Endothelial cell of umbilical vein (primary cell): ENCODE measurements at regions of chr2 and their contacts with region 1.

Region 1: GRCh38 chr2:120722568-120723421 is 12.9 kb upstream of the GLI2 start:
- DNase-seq: peak; percentile 68
- H3K4me3 ChIP-seq: no peak overlapping the region
- H3K27ac ChIP-seq: peak overlapping the region; percentile 69
- H3K4me1 ChIP-seq: peaks cover 15% of the 10 kb centered on the region
- H3K27me3 ChIP-seq: peaks cover 3 to 6% of the 10 kb centered on the region in 2 experiments
- CTCF ChIP-seq: no peak
- POLR2A ChIP-seq: no peak

Region 2: GRCh38 chr2:120703330-120703994 is 19.3 kb before region 1 on chr2:
- CTCF ChIA-PET with region 1: no interaction called
- POLR2A ChIA-PET with region 1: no interaction called
- dilution Hi-C with region 1: no loop called
- intact Hi-C with region 1: loop called (anchors 2 kb)
- DNase-seq: peak; percentile 61
- H3K4me3 ChIP-seq: no peak overlapping the region
- H3K27ac ChIP-seq: no peak overlapping the region
- H3K4me1 ChIP-seq: peaks cover 4% of the 10 kb centered on the region
- H3K27me3 ChIP-seq: peaks cover 2 to 5% of the 10 kb centered on the region in 2 experiments
- CTCF ChIP-seq: no peak
- POLR2A ChIP-seq: no peak

Region 3: DNA sequence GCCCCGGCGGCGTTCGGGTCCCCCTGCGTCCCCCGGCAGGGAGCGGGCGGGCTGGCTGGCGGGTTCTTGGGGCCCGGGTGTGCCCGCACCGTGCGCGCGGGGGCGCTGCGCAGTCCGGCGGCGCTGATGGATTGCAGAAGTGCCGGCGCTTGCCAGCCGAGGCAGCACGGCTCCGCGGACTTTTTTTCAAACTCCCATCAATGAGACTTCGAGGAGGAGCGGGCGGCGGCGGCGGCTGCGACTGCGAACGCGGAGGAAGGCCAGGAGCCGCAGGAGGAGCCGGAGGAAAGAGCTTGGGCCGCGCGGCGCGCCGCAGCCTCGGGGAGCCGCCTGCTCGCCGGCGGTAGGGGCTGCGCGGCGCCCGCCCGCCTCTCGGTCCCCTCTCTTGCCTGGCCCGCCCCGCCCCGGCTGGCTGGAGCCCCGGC is 13.0 kb after region 1 on chr2 and contains the start of gene GLI2:
- CTCF ChIA-PET with region 1: interaction called, 5 read pairs
- POLR2A ChIA-PET with region 1: no interaction called
- dilution Hi-C with region 1: no loop called
- intact Hi-C with region 1: loop called (anchors 1 kb)
- DNase-seq: peak; percentile 63
- H3K4me3 ChIP-seq: peak within 1 kb of the TSS in 1 of 3 experiments; percentile 8
- H3K27ac ChIP-seq: no peak within 1 kb of the TSS
- H3K4me1 ChIP-seq: no peaks in the 10 kb centered on the region
- H3K27me3 ChIP-seq: peaks cover 63 to 83% of the 10 kb centered on the region in 2 experiments
- CTCF ChIP-seq: peak; percentile 56 to 64
- POLR2A ChIP-seq: no peak
- total RNA-seq, gene GLI2: 0.13 and 0.51 TPM in 2 replicates

Region 4: DNA sequence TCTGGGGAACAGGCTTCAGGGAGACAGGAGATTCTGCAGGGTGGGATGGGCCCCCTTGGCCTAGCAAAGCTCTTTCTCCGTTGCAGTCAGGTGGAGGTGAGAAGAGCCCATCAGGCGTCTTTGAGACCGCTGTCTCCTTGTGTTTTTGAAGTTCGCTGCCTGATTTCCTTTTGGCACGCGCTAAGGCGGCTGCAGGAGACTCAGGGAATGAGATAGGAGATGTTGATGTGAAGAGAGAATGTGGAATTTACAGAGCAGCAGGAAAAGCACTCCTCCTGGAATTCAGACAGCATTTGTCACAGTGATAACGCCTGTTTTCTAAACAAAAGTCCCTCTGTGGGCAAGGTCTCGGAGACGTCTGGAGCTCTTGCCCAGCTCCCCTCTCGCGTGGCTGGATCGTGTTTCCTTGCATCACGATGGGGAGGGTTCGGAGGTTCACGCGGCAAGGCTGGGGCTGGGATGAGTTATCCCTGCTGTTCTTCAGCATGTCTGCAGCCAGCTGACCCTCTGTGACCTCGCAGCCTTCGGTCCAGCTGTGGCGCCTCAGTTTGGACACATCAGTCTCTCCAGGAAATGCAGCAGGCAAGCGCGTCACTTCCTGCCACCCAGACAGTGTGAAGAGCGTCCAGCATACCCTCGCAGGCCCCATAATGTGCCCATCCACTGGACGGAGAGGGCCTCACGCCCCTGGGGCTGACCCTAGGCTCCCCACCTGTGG is 43.0 kb after region 1 on chr2:
- CTCF ChIA-PET with region 1: no interaction called
- POLR2A ChIA-PET with region 1: no interaction called
- dilution Hi-C with region 1: no loop called
- intact Hi-C with region 1: loop called (anchors 1 kb)
- DNase-seq: peak; percentile 28
- H3K4me3 ChIP-seq: no peak overlapping the region
- H3K27ac ChIP-seq: peak overlapping the region; percentile 43
- H3K4me1 ChIP-seq: peaks cover 15% of the 10 kb centered on the region
- H3K27me3 ChIP-seq: no peaks in the 10 kb centered on the region
- CTCF ChIP-seq: no peak
- POLR2A ChIP-seq: no peak

Region 5: GRCh38 chr2:120797421-120798221 is 74.8 kb after region 1 on chr2:
- CTCF ChIA-PET with region 1: no interaction called
- POLR2A ChIA-PET with region 1: no interaction called
- dilution Hi-C with region 1: no loop called
- intact Hi-C with region 1: no loop called
- DNase-seq: no peak
- H3K4me3 ChIP-seq: no peak overlapping the region
- H3K27ac ChIP-seq: no peak overlapping the region
- H3K4me1 ChIP-seq: no peaks in the 10 kb centered on the region
- H3K27me3 ChIP-seq: peaks cover 0 to under 1% of the 10 kb centered on the region in 2 experiments
- CTCF ChIP-seq: no peak
- POLR2A ChIP-seq: no peak